Stomach (tissue), 19 donors: ENCODE measurements at regions of chr1 and their contacts with region 1.

Region 1: GRCh38 chr1:10796019-10796944 is at the start of gene CASZ1:
- DNase-seq: peak; percentile 89 to 96
- H3K4me3 ChIP-seq: peak within 1 kb of the TSS; percentile 68 to 81 (median 74)
- H3K27ac ChIP-seq: peak within 1 kb of the TSS; percentile 84 to 92 (median 91)
- H3K4me1 ChIP-seq: peaks cover 23 to 62% (median 49%) of the 10 kb centered on the region in 4 donors
- H3K27me3 ChIP-seq: peaks cover 0 to 80% (median 15%) of the 10 kb centered on the region in 3 donors
- CTCF ChIP-seq: no peak
- EP300 ChIP-seq: no peak
- POLR2A ChIP-seq: peak in 2 of 4 donors; percentile 38 to 69
- total RNA-seq, gene CASZ1: 24.6 to 166 (median 66.5) TPM

Region 2: GRCh38 chr1:10679496-10680220 is 116.6 kb before region 1 on chr1:
- intact Hi-C with region 1: loop called (anchors 10 kb)
- DNase-seq: peak; percentile 87 to 92
- H3K4me3 ChIP-seq: peak overlapping the region in 1 of 4 donors; percentile 2
- H3K27ac ChIP-seq: peak overlapping the region; percentile 62 to 97 (median 92)
- H3K4me1 ChIP-seq: peaks cover 99 to 100% (median 100%) of the 10 kb centered on the region in 4 donors
- H3K27me3 ChIP-seq: no peaks in the 10 kb centered on the region
- CTCF ChIP-seq: no peak
- EP300 ChIP-seq: no peak
- POLR2A ChIP-seq: no peak